ENCODE measurements at regions of chr11 and their contacts with region 1.

Region 1: GRCh38 chr11:3412837-3413236 is 33.9 kb upstream of the ZNF195 start:
- DNase-seq: no peak
- ATAC-seq: no peak
- H3K4me3 ChIP-seq: no peak overlapping the region
- H3K4me3 Mint-ChIP-seq: no peak overlapping the region
- H3K27ac ChIP-seq: no peak overlapping the region
- H3K27ac Mint-ChIP-seq: no peak overlapping the region
- H3K4me1 ChIP-seq: no peaks in the 10 kb centered on the region
- H3K4me1 Mint-ChIP-seq: peaks cover 7% of the 10 kb centered on the region
- H3K27me3 ChIP-seq: no peaks in the 10 kb centered on the region
- H3K27me3 Mint-ChIP-seq: peaks cover 2% of the 10 kb centered on the region
- CTCF ChIP-seq: no peak

Region 2: DNA sequence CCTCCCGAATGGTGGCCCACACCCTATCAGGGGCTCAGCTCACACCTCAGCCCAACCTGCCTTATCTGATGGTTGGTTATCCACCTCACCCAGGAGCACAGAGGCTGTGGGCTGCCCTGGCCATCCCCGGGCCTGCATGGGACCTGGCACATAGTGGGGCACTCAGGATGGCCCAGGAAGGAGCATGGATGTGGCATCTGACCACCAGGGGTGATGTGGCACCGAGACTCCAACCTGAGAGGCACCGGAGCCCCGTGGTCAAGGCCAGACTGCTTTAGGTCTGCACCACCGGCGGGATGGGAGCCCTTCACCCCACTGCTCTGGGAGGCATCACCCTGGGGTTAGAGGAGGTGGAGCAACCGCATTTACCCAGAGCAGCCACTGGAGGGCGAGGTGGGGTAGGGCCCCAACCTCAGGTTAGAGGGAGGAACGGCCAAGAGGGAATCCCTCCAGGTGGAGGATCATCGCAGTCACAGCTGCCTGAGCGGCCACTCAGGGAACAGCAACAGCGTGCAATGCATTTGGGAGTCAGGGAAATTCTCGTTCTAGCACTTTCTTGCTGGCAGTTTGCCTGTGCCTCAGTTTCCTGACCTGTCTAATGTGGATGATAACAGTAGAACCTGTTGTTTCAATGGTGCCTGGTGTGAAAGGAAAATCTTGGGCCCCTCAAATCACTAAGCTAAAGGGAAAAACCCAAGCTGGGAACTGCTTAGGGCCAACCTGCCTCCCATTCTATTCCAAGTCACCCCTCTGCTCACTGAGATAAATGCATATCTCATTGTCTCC is 302.7 kb before region 1 on chr11:
- CTCF ChIA-PET with region 1: interaction called, 3 read pairs
- POLR2A ChIA-PET with region 1: no interaction called
- intact Hi-C with region 1: loop called in 1 of 2 experiments (anchors 10 kb)
- DNase-seq: peak in 8 of 9 experiments; percentile 16 to 71 (median 45)
- ATAC-seq: peak; percentile 72
- H3K4me3 ChIP-seq: no peak overlapping the region
- H3K4me3 Mint-ChIP-seq: no peak overlapping the region
- H3K27ac ChIP-seq: no peak overlapping the region
- H3K27ac Mint-ChIP-seq: no peak overlapping the region
- H3K4me1 ChIP-seq: peaks cover 3% of the 10 kb centered on the region
- H3K4me1 Mint-ChIP-seq: peaks cover 8% of the 10 kb centered on the region
- H3K27me3 ChIP-seq: no peaks in the 10 kb centered on the region
- H3K27me3 Mint-ChIP-seq: no peaks in the 10 kb centered on the region
- CTCF ChIP-seq: peak; percentile 40

Region 3: GRCh38 chr11:3203221-3204043 is 209.4 kb before region 1 on chr11:
- CTCF ChIA-PET with region 1: no interaction called
- POLR2A ChIA-PET with region 1: no interaction called
- intact Hi-C with region 1: no loop called
- DNase-seq: no peak
- ATAC-seq: no peak
- H3K4me3 ChIP-seq: no peak overlapping the region
- H3K4me3 Mint-ChIP-seq: no peak overlapping the region
- H3K27ac ChIP-seq: no peak overlapping the region
- H3K27ac Mint-ChIP-seq: no peak overlapping the region
- H3K4me1 ChIP-seq: peaks cover 29% of the 10 kb centered on the region
- H3K4me1 Mint-ChIP-seq: peaks cover 3% of the 10 kb centered on the region
- H3K27me3 ChIP-seq: peaks cover 0 to 17% of the 10 kb centered on the region in 2 experiments
- H3K27me3 Mint-ChIP-seq: peaks cover 12% of the 10 kb centered on the region
- CTCF ChIP-seq: no peak

Region 4: DNA sequence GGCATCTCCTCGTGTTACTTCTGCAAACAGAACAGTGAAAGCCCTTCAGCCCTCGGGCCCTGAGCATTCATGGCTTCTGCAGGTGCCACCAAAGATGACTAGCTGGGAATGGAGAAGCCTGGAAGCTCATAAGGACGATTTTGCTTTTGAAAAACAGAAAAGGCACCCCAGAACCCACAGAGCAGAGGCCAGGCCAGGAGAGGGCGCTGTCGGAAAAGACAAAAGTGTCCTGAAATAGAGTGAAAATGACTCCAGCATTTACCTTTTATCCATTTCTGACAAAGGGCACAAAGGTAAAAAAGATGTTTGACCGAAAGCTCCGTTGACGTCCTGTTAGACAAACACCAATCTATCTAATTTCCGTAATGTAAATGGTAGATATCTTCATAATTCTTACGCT is 71.5 kb before region 1 on chr11:
- CTCF ChIA-PET with region 1: interaction called, 50 read pairs
- POLR2A ChIA-PET with region 1: no interaction called
- intact Hi-C with region 1: loop called (anchors 5 to 10 kb)
- DNase-seq: peak; percentile 38 to 74 (median 67)
- ATAC-seq: peak; percentile 55
- H3K4me3 ChIP-seq: no peak overlapping the region
- H3K4me3 Mint-ChIP-seq: no peak overlapping the region
- H3K27ac ChIP-seq: no peak overlapping the region
- H3K27ac Mint-ChIP-seq: no peak overlapping the region
- H3K4me1 ChIP-seq: no peaks in the 10 kb centered on the region
- H3K4me1 Mint-ChIP-seq: no peaks in the 10 kb centered on the region
- H3K27me3 ChIP-seq: no peaks in the 10 kb centered on the region
- H3K27me3 Mint-ChIP-seq: peaks cover 30% of the 10 kb centered on the region
- CTCF ChIP-seq: peak; percentile 76

Region 5: DNA sequence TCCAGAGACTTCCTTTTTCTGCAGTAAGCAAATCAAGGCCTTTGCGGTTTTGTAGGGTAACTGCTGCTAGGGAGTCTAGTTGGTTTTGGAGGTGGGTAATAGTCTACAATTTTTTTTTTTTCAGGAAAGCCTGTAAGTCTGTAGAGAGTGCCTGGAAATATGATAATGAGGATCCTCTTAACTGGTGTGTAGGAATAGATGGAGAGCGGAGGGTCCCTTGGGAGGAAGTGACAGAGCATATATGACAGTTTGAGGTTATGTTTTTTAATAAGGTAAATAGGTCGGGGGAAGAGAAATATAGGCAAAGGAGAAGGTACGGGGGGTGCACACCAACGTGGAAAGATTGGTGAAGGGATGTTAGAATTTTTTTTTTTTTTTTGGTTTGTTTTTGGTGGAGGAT is 59.8 kb before region 1 on chr11:
- CTCF ChIA-PET with region 1: interaction called, 13 read pairs
- POLR2A ChIA-PET with region 1: no interaction called
- intact Hi-C with region 1: loop called in 1 of 2 experiments (anchors 10 kb)
- DNase-seq: no peak
- ATAC-seq: no peak
- H3K4me3 ChIP-seq: no peak overlapping the region
- H3K4me3 Mint-ChIP-seq: no peak overlapping the region
- H3K27ac ChIP-seq: no peak overlapping the region
- H3K27ac Mint-ChIP-seq: no peak overlapping the region
- H3K4me1 ChIP-seq: no peaks in the 10 kb centered on the region
- H3K4me1 Mint-ChIP-seq: no peaks in the 10 kb centered on the region
- H3K27me3 ChIP-seq: no peaks in the 10 kb centered on the region
- H3K27me3 Mint-ChIP-seq: no peaks in the 10 kb centered on the region
- CTCF ChIP-seq: no peak

Region 6: DNA sequence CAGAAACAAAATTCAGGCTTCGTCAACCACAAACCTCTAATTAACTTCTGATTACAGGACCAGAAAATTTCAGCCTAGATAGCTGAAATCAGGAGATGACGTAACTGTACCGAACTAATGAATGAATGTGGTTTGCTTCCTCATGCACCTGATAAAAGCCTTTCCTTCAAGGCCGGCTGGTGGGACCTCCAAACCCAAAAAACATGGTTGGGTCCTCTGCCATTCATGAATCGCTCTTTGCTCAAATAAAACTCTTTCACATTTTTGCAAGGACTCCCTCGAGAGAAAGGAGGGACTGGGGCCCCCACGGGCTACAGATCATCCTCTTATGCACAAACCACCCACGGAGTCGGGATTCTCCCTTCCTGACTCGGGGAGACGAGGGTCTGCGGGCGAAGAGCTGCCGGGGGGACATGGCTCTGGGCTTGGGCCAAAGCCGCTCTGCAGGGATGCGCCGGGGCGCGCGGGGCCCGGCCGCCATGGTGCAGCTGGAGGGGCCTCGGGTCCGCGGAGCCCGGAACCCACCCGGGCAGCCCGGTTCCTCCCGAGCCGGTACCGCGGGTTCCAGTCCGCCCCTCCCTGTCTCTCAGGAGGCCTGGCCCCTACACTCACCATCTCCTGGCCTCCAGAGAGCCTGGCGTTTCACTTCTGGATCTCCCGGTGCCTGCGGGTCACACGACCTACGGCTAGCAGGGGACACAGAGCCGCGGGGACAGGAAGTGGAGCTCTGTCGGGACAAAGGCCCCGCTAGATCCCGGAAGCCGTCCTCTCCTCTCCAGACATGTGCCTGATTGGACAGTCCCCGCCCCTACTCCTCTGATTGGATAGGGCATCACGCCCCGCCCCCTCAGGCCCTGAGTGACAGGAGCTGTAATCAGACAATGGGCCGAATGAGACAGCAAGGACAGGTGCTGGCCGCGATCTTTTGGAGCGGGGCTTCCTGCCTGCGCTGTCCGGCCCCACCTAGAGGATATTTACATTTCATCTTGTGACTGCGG is 34.1 kb before region 1 on chr11 and contains the start of gene ZNF195:
- CTCF ChIA-PET with region 1: interaction called, 14 read pairs
- POLR2A ChIA-PET with region 1: no interaction called
- intact Hi-C with region 1: no loop called
- DNase-seq: peak; percentile 92 to 98 (median 97)
- ATAC-seq: peak; percentile 99
- H3K4me3 ChIP-seq: peak within 1 kb of the TSS; percentile 84 to 97
- H3K4me3 Mint-ChIP-seq: peak within 1 kb of the TSS; percentile 96
- H3K27ac ChIP-seq: peak within 1 kb of the TSS; percentile 80 to 91
- H3K27ac Mint-ChIP-seq: peak within 1 kb of the TSS; percentile 95
- H3K4me1 ChIP-seq: peaks cover 27% of the 10 kb centered on the region
- H3K4me1 Mint-ChIP-seq: peaks cover 58% of the 10 kb centered on the region
- H3K27me3 ChIP-seq: no peaks in the 10 kb centered on the region
- H3K27me3 Mint-ChIP-seq: no peaks in the 10 kb centered on the region
- CTCF ChIP-seq: no peak
- total RNA-seq, gene ZNF195: 25.5 to 29.1 TPM

Measured in CD8-positive, alpha-beta T cell (primary cell).